Activated T-helper 1 cell treated with anti-CD3 and anti-CD28 coated beads, Interleukin-12 subunit alpha, Interleukin-12 subunit beta, Interleukin-2, Interleukin-4 antibody, amounts not matched to agents 30 ng/mL and 10 ng/mL and 1 ng/mL, durations not matched to agents 14 hours and 24 hours and 36 hours (primary cell): ENCODE measurements at regions of chr15 and their contacts with region 1.

Region 1: GRCh38 chr15:68277603-68278344 is at the start of gene FEM1B:
- DNase-seq: peak; percentile 85
- H3K4me3 Mint-ChIP-seq: peak within 1 kb of the TSS; percentile 100
- H3K27ac Mint-ChIP-seq: peak within 1 kb of the TSS; percentile 97
- H3K4me1 Mint-ChIP-seq: peaks cover 68% of the 10 kb centered on the region
- H3K27me3 Mint-ChIP-seq: no peaks in the 10 kb centered on the region
- total RNA-seq, gene FEM1B: 42.8 and 49.4 TPM in 2 replicates

Region 2: GRCh38 chr15:67992834-67993233 is 284.9 kb before region 1 on chr15:
- intact Hi-C with region 1: no loop called
- DNase-seq: no peak
- H3K4me3 Mint-ChIP-seq: no peak overlapping the region
- H3K27ac Mint-ChIP-seq: no peak overlapping the region
- H3K4me1 Mint-ChIP-seq: no peaks in the 10 kb centered on the region
- H3K27me3 Mint-ChIP-seq: peaks cover 3% of the 10 kb centered on the region

Region 3: DNA sequence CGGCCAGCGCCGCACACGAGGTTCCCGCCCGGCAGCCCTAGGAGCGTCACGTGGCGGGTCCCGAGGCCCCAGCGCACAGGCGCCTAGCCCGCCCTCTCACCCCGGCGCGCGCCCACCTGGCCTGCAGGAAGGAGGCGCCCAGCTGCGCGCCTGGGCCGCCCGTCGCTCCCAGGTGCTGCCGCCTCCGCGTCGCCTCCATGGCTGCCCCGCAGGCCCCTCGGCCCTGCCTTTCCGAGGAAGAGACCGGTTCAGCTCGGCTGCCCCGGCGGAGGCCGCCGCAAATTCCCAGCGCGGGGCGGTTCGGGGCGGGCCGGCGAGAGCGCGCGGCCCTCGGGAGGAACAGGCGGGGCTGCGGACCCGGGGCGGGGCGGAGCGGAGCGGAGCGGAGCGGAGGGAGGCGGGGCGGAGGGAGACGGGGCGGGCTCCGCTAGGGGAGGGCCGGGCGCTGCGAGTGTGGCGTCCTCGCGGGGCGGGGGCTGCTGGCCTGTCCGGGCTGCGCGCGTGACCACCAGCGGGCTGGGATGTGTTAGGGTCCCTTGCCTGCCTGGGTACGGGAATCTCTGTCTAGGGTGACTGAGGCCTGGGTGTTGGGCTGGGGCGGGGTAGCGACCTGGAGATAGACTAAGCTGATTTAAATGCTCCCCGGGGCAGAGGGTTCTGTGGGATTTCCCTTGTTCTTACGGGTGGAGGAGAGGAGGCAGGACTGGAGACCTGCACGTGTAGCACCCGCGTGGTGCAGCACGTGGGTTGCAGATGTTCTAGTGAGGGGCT is 48.2 kb before region 1 on chr15 and contains the start of gene CLN6:
- intact Hi-C with region 1: loop called (anchors 1 kb)
- DNase-seq: peak; percentile 73
- H3K4me3 Mint-ChIP-seq: peak within 1 kb of the TSS; percentile 94
- H3K27ac Mint-ChIP-seq: peak within 1 kb of the TSS; percentile 96
- H3K4me1 Mint-ChIP-seq: peaks cover 40% of the 10 kb centered on the region
- H3K27me3 Mint-ChIP-seq: no peaks in the 10 kb centered on the region
- total RNA-seq, gene CLN6: 95.3 and 98.3 TPM in 2 replicates

Region 4: DNA sequence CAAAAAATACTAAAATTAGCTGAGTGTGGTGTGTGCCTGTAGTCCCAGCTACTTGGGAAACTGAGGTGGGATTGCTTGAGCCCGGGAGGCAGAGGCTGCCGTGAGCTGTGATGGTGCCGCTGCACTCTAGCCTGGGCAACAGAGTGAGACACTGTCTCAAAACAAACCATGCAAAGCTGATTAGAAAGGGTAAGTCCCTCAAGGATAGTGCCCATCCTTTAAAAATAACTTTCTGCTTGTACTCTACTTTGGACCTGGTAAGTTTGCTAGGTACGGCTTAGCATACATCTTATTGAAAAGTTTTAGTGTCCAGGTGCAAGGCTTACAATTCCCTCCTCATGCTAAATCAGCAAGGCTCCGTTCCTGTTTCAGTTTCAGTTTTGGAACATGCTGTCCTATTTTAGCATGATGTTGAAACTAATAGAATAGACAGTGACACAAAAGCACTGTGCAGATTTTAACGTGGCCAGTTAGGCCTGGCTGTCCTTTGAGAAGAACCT is 21.2 kb after region 1 on chr15:
- intact Hi-C with region 1: loop called (anchors 1 kb)
- DNase-seq: peak; percentile 31
- H3K4me3 Mint-ChIP-seq: peak overlapping the region; percentile 74
- H3K27ac Mint-ChIP-seq: peak overlapping the region; percentile 70
- H3K4me1 Mint-ChIP-seq: peaks cover 23% of the 10 kb centered on the region
- H3K27me3 Mint-ChIP-seq: no peaks in the 10 kb centered on the region

Region 5: GRCh38 chr15:68383161-68384074 is 105.6 kb after region 1 on chr15:
- intact Hi-C with region 1: loop called (anchors 1 kb)
- DNase-seq: peak; percentile 25
- H3K4me3 Mint-ChIP-seq: no peak overlapping the region
- H3K27ac Mint-ChIP-seq: no peak overlapping the region
- H3K4me1 Mint-ChIP-seq: peaks cover 18% of the 10 kb centered on the region
- H3K27me3 Mint-ChIP-seq: peaks cover 3% of the 10 kb centered on the region

Region 6: DNA sequence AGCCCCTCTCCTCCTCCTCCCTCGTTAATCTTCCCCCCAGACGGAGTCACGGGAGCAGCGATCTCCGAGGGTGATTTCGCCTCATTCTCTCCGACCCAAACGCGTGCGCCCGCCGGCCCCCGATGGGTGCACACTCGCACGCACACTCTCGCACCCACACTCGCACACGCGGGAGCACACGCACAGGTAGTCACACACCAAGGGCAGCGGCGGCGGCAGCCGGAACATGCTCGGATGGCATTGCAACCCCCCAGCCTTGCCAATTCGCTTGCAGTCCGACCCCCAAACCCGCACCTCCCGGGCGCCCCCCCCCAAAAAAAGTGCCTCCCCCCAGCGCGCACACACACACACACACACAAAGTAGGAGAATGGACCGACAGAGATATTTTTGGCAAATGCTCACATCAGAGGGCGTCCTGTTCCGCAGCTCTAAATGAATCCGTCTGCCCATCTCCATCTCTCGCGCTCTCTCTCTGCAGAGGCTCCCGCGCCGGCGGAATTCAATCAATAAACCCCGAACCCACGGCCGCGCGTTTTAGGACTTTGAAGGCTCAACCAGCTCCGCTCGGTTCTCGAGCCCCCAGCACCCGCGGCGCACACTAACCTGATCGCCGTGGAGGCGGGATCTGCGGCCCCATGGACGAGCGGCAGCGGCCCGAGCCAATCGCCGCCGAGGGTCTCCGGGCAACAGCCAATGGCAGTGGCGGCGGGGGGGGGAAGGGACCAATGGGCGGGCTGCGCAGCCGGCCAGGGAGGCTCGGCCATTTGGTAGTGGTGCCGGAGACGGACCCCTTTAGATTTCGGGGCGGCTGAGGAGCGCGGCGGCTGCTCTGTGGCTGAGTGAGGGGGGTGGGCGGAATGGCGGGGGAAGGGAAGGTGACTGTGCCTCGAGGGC is 542.8 kb after region 1 on chr15 and contains the start of gene ANP32A:
- intact Hi-C with region 1: loop called (anchors 1 kb)
- DNase-seq: peak; percentile 94
- H3K4me3 Mint-ChIP-seq: peak within 1 kb of the TSS; percentile 98
- H3K27ac Mint-ChIP-seq: peak within 1 kb of the TSS; percentile 100
- H3K4me1 Mint-ChIP-seq: peaks cover 40% of the 10 kb centered on the region
- H3K27me3 Mint-ChIP-seq: no peaks in the 10 kb centered on the region
- total RNA-seq, gene ANP32A: 275 TPM in 2 replicates